ENCODE measurements at regions of chr12 and their contacts with region 1.

Region 1: GRCh38 chr12:96249196-96250118 is 55.3 kb downstream of the ELK3 start:
- DNase-seq: no peak
- H3K4me3 ChIP-seq: no peak overlapping the region
- H3K27ac ChIP-seq: peak overlapping the region; percentile 50 to 80
- H3K4me1 ChIP-seq: no peaks in the 10 kb centered on the region
- H3K27me3 ChIP-seq: no peaks in the 10 kb centered on the region
- CTCF ChIP-seq: no peak
- POLR2A ChIP-seq: no peak

Region 2: GRCh38 chr12:95739561-95740313 is 509.7 kb before region 1 on chr12:
- intact Hi-C with region 1: loop called (anchors 5 kb)
- DNase-seq: peak; percentile 69 to 80
- H3K4me3 ChIP-seq: peak overlapping the region in 2 of 3 donors; percentile 4 to 29
- H3K27ac ChIP-seq: peak overlapping the region; percentile 89 to 90
- H3K4me1 ChIP-seq: peaks cover 0 to 6% of the 10 kb centered on the region in 2 donors
- H3K27me3 ChIP-seq: no peaks in the 10 kb centered on the region
- CTCF ChIP-seq: no peak
- POLR2A ChIP-seq: no peak

Region 3: DNA sequence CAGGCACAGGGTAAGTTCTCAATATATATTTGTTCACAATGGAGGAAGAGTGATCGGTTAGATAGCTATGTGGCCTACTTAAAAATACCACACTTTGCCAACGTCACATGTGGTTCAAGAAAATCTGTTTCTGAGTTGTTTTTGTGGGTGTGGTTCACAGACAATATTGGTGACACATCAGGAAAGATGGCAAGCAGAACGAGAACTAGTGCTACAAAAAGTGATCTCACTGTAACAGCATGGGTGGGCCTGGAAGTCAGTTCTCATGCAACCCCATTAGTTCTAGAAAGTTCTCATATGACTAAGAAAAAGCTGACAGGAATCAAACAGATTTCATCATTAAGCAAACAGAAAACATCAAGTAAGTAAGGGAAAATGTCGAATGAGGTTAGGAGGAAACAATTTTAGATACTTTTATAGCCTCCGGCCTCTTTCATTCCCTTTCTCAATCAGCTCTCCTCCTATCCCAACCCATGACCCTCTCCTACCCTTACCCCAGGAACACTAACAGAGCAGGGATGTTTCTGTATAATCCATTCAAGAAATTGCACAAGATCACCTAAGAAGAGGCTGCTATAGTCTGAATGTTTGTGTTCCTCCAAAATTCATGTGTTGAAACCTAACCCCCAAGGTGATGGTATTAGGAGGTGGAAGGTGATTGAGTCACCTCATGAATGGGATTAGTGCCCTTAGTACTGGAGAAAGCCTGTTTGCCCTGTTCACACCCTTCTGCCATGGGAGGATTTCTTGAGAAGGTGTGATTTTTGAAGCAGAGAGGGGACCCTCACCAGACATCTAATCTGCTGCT is 443.4 kb before region 1 on chr12:
- intact Hi-C with region 1: no loop called
- DNase-seq: no peak
- H3K4me3 ChIP-seq: no peak overlapping the region
- H3K27ac ChIP-seq: peak overlapping the region; percentile 59 to 69
- H3K4me1 ChIP-seq: peaks cover 0 to 5% of the 10 kb centered on the region in 2 donors
- H3K27me3 ChIP-seq: no peaks in the 10 kb centered on the region
- CTCF ChIP-seq: no peak
- POLR2A ChIP-seq: no peak

Measured in breast epithelium (tissue), 4 donors.